ENCODE measurements at regions of chr4 and their contacts with region 1.

Region 1: DNA sequence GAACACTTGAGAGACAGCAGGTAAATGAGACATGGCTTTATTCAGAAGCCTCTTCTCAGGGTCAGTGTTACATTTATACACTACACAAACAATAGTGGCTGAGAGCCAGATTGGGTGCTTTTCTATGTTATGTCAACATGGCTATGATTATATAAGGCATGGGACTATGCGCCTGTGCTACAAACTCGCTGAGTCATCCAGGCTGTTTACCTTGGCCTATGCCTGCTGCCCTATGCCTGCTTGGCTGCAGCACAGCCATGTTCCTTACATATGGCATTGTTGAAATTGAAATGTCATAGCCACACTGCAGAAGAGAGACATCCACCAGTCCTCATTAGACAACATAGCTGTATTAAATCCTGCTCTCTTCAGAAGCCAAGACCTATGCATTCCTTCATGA is 236.3 kb upstream of the NWD2 start:
- DNase-seq: no peak
- H3K4me3 ChIP-seq: no peak overlapping the region
- H3K27ac ChIP-seq: no peak overlapping the region
- H3K4me1 ChIP-seq: no peaks in the 10 kb centered on the region
- H3K27me3 ChIP-seq: no peaks in the 10 kb centered on the region

Region 2: GRCh38 chr4:36884151-36884550 is 124.0 kb before region 1 on chr4:
- in situ Hi-C with region 1: no loop called
- DNase-seq: no peak
- H3K4me3 ChIP-seq: no peak overlapping the region
- H3K27ac ChIP-seq: no peak overlapping the region
- H3K4me1 ChIP-seq: no peaks in the 10 kb centered on the region
- H3K27me3 ChIP-seq: no peaks in the 10 kb centered on the region

Region 3: GRCh38 chr4:36914106-36914505 is 94.1 kb before region 1 on chr4:
- in situ Hi-C with region 1: loop called (anchors 25 kb)
- DNase-seq: no peak
- H3K4me3 ChIP-seq: no peak overlapping the region
- H3K27ac ChIP-seq: no peak overlapping the region
- H3K4me1 ChIP-seq: no peaks in the 10 kb centered on the region
- H3K27me3 ChIP-seq: no peaks in the 10 kb centered on the region

Measured in GM23248 (cell line).